ENCODE measurements at regions of chr15 and their contacts with region 1.

Region 1: DNA sequence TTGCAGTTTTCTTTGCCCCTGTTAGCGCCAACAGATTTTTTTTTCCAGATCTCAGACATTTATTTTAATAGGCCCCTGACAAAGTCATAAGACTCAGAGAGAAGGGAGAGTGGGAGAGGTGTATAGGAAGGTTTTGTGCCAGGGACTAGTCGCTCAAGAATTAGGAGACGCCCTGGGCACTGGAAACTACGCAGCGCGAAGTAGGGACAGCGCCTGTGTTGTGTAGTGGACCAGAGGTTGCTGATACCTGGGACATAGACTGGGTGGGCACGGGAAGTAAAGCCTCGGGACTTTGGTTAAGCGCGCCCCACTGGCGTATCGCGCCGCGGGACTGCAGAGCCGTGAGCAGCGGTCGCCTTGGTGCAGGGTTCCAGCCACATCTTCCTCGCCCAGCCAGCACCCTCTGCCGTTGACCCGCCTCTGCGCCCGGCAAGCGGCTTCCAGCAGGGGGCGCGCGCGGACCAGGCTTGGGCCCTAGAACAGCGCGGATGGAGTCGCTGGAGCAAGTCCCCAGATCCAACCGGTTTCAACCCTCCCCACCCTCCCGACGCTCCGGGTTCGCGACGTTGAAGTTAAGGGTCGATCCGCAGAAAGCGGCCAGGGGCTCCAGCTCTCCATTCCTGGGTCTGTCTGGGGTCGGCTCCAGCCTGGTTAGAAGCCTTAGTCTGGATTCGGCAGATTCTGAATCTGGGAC is 3.0 kb upstream of the ISLR2 start:
- DNase-seq: peak; percentile 82 to 87 (median 87)
- H3K4me3 ChIP-seq: peak overlapping the region in 3 of 7 experiments; percentile 32 to 59 (median 52)
- H3K27ac ChIP-seq: no peak overlapping the region
- H3K4me1 ChIP-seq: peaks cover 6 to 44% (median 35%) of the 10 kb centered on the region in 4 experiments
- H3K27me3 ChIP-seq: peaks cover 0 to 68% (median 35%) of the 10 kb centered on the region in 5 experiments

Region 2: GRCh38 chr15:74025436-74025835 is 102.0 kb before region 1 on chr15:
- CTCF ChIA-PET with region 1: no interaction called
- POLR2A ChIA-PET with region 1: no interaction called
- DNase-seq: no peak
- H3K4me3 ChIP-seq: no peak overlapping the region
- H3K27ac ChIP-seq: no peak overlapping the region
- H3K4me1 ChIP-seq: no peaks in the 10 kb centered on the region
- H3K27me3 ChIP-seq: no peaks in the 10 kb centered on the region

Region 3: DNA sequence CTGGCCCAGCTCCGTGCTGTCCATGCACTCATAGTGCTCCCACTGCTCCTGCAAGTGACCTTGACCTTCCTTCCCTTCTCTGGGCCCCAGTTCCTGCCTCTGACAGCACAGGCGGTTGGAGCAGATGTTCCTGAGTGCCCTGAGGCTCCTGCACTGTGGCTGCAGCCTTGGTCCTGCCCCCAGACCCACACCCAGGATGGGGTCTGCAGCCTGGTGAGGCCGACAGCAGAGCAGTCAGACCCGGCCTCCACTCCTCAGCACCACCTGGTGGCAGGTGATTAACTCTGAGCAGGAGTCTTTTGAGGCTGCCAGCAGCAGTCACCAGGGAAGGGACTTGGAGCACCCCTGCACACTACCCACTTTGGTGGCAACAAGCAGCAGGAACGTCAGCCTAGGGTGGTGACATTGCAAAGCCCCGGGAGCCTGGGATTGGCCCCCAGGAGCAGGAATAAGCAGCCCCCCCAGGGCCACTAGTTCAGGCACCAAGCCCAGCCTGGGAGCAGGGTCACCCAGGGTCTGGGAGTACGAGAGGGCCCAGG is 175.5 kb after region 1 on chr15:
- CTCF ChIA-PET with region 1: interaction called, 12 read pairs
- POLR2A ChIA-PET with region 1: no interaction called
- DNase-seq: peak; percentile 31 to 54 (median 47)
- H3K4me3 ChIP-seq: no peak overlapping the region
- H3K27ac ChIP-seq: no peak overlapping the region
- H3K4me1 ChIP-seq: peaks cover 0 to 3% (median 0%) of the 10 kb centered on the region in 4 experiments
- H3K27me3 ChIP-seq: peaks cover 0 to 63% (median 39%) of the 10 kb centered on the region in 5 experiments

Region 4: GRCh38 chr15:74307827-74308644 is 180.6 kb after region 1 on chr15:
- CTCF ChIA-PET with region 1: interaction called, 12 read pairs
- POLR2A ChIA-PET with region 1: no interaction called
- DNase-seq: peak; percentile 57 to 72 (median 59)
- H3K4me3 ChIP-seq: no peak overlapping the region
- H3K27ac ChIP-seq: no peak overlapping the region
- H3K4me1 ChIP-seq: peaks cover 0 to 19% (median 0%) of the 10 kb centered on the region in 4 experiments
- H3K27me3 ChIP-seq: peaks cover 0 to 30% (median 17%) of the 10 kb centered on the region in 5 experiments